Activated naive CD4-positive, alpha-beta T cell treated with anti-CD3 and anti-CD28 coated beads, Interleukin-2, amount 10 ng/mL, durations not matched to agents 7 days and 5 days (primary cell): ENCODE measurements at regions of chr7 and their contacts with region 1.

Region 1: GRCh38 chr7:130758429-130759056 is 24.5 kb upstream of the KLF14 start:
- DNase-seq: no peak
- H3K4me3 Mint-ChIP-seq: no peak overlapping the region
- H3K27ac Mint-ChIP-seq: no peak overlapping the region
- H3K4me1 Mint-ChIP-seq: no peaks in the 10 kb centered on the region
- H3K27me3 Mint-ChIP-seq: peaks cover 26% of the 10 kb centered on the region

Region 2: GRCh38 chr7:130071701-130072622 is 686.6 kb before region 1 on chr7:
- CTCF ChIA-PET with region 1: interaction called, 16 read pairs
- DNase-seq: peak; percentile 65
- H3K4me3 Mint-ChIP-seq: peak overlapping the region; percentile 94
- H3K27ac Mint-ChIP-seq: no peak overlapping the region
- H3K4me1 Mint-ChIP-seq: peaks cover 35% of the 10 kb centered on the region
- H3K27me3 Mint-ChIP-seq: no peaks in the 10 kb centered on the region

Region 3: DNA sequence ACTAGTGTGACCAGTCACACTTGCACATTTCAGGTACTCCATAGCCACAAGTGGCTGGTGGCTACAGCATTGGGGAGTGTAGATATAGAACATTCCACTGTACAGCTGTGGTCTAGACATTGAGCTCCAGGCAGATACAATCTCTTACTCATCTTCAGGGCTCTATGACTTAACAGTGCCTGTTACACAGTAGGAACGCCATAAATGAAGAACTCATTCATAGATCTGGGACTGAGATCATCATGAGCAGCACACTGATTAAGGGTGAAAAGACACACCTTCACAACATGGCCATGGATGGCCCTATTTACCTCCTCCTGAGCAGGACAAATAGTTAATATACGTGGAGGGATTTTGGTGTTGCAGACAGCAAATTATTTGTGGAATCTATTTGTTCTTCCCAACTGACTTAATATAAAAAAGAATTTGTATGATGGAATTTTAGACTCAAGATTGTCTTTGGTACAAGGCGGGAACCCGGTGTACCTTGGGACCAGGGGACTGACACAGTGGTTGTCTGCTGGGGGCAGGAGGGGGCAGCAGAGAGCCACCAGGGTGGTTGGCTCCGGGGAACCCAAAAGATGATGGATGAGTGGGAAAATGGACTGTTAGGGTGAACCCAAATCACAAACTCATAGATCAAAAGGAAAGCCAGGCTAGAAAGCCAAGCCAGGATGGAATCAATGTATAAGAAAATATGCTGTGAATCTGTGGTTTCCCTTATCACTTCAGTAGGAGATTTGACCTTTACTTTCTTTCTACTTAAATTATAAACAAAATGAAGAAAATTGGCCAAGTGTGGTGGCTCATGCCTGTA is 516.1 kb before region 1 on chr7:
- CTCF ChIA-PET with region 1: interaction called, 12 read pairs
- DNase-seq: peak; percentile 68
- H3K4me3 Mint-ChIP-seq: no peak overlapping the region
- H3K27ac Mint-ChIP-seq: no peak overlapping the region
- H3K4me1 Mint-ChIP-seq: peaks cover 9% of the 10 kb centered on the region
- H3K27me3 Mint-ChIP-seq: peaks cover 23% of the 10 kb centered on the region

Region 4: GRCh38 chr7:131654668-131655326 is 896.3 kb after region 1 on chr7:
- CTCF ChIA-PET with region 1: no interaction called
- DNase-seq: peak; percentile 88
- H3K4me3 Mint-ChIP-seq: no peak overlapping the region
- H3K27ac Mint-ChIP-seq: no peak overlapping the region
- H3K4me1 Mint-ChIP-seq: no peaks in the 10 kb centered on the region
- H3K27me3 Mint-ChIP-seq: peaks cover 12% of the 10 kb centered on the region